CD8-positive, alpha-beta memory T cell (primary cell): ENCODE measurements at regions of chr6 and their contacts with region 1.

Region 1: GRCh38 chr6:158026054-158026900 is 44.6 kb downstream of the SYNJ2 start:
- DNase-seq: peak; percentile 67 to 90 (median 81)
- H3K4me3 ChIP-seq: peak overlapping the region; percentile 67
- H3K4me3 Mint-ChIP-seq: peak overlapping the region; percentile 80 to 91 (median 85)
- H3K27ac ChIP-seq: peak overlapping the region; percentile 73
- H3K27ac Mint-ChIP-seq: peak overlapping the region; percentile 96 to 99 (median 98)
- H3K4me1 ChIP-seq: peaks cover 27% of the 10 kb centered on the region
- H3K4me1 Mint-ChIP-seq: peaks cover 35 to 37% (median 36%) of the 10 kb centered on the region in 3 donors
- H3K27me3 ChIP-seq: no peaks in the 10 kb centered on the region
- H3K27me3 Mint-ChIP-seq: no peaks in the 10 kb centered on the region

Region 2: GRCh38 chr6:157756708-157757429 is 269.4 kb before region 1 on chr6:
- CTCF ChIA-PET with region 1: interaction called, 11 read pairs
- POLR2A ChIA-PET with region 1: no interaction called
- DNase-seq: peak; percentile 63 to 82 (median 69)
- H3K4me3 ChIP-seq: no peak overlapping the region
- H3K4me3 Mint-ChIP-seq: peak overlapping the region in 3 of 7 donors; percentile 20 to 41 (median 28)
- H3K27ac ChIP-seq: no peak overlapping the region
- H3K27ac Mint-ChIP-seq: peak overlapping the region in 5 of 8 donors; percentile 7 to 89 (median 64)
- H3K4me1 ChIP-seq: peaks cover 41% of the 10 kb centered on the region
- H3K4me1 Mint-ChIP-seq: peaks cover 26 to 64% (median 42%) of the 10 kb centered on the region in 3 donors
- H3K27me3 ChIP-seq: no peaks in the 10 kb centered on the region
- H3K27me3 Mint-ChIP-seq: peaks cover 23 to 25% of the 10 kb centered on the region in 2 donors

Region 3: DNA sequence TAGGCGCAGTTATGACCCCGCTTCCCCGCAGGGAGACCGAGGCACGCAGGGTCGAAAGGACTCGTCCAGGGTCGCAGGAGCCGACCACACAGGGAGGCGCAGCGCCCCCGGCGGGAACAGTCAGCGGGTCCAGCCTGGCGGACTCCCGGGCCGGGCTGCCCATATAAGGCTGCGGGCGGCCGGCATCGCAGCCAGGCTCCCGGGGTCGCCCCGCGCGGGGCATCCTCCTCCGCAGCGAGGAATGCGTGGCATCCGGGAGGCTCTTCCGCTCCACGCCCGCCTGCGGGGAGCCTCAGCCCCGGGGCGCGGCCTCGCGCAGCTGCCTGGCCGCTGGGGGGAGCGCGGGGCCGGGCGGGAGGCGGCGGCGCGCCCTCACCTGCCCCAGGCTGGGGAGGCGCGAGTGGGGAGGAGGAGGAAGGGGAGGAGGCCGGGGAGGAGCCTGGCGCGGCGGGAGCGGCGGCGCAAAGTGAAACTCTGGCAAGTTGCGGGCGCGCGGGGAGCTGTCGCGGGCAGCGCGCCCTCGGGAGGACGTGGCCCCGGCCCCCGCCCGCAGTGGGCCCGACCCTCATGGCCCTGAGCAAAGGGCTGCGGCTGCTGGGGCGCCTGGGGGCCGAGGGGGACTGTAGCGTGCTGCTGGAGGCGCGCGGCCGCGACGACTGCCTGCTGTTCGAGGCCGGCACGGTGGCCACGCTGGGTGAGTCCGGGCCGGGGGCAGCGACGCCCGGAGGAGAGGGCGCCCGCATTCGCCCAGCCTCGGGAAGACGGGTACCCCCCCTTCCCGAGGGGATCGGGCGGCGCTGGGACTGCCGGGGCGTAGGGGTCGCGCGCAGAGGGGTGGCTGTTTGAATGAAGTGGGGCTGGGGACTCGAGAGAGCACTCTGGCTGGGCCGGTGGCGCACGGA is 44.6 kb before region 1 on chr6 and contains the start of gene SYNJ2:
- CTCF ChIA-PET with region 1: interaction called, 22 read pairs
- POLR2A ChIA-PET with region 1: interaction called, 5 read pairs
- DNase-seq: peak; percentile 67 to 87 (median 84)
- H3K4me3 ChIP-seq: peak within 1 kb of the TSS; percentile 90
- H3K4me3 Mint-ChIP-seq: peak within 1 kb of the TSS; percentile 90 to 93 (median 92)
- H3K27ac ChIP-seq: peak within 1 kb of the TSS; percentile 48
- H3K27ac Mint-ChIP-seq: peak within 1 kb of the TSS; percentile 72 to 96 (median 88)
- H3K4me1 ChIP-seq: peaks cover 39% of the 10 kb centered on the region
- H3K4me1 Mint-ChIP-seq: peaks cover 30 to 48% (median 31%) of the 10 kb centered on the region in 3 donors
- H3K27me3 ChIP-seq: no peaks in the 10 kb centered on the region
- H3K27me3 Mint-ChIP-seq: peaks cover 0 to 1% of the 10 kb centered on the region in 2 donors
- total RNA-seq, gene SYNJ2: 16.7 to 17.5 TPM

Region 4: DNA sequence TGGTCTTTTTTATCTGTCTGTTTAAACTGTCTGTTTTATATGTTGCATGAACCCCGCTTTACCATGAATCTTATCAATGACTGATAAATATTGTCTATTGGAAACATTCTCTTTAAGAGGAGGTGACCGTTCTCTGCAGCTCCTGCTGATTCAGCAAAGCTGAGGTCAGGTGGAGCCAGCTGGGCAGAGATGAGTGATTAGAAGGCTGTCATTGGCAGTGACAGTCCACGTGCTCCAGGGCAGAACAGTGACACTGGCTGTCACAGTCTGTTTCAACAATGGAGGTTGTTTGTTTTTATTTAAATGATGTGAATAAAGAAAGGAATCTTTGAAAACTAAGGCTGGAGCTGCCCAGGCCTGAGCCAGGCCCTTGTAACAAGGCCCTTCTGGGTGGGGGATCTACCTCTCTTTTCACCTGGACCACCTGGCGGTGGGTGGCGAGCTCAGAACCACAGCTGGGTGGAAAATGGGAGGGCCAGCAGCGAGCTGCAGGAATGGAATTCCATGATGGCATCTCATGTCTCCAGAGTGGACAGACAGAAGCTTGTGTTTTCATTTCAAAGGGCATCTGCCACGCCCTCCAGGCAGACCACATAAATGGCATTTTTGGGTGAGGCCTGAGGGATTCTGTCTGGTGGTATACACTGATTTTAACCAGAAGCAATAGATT is 32.0 kb before region 1 on chr6:
- CTCF ChIA-PET with region 1: interaction called, 12 read pairs
- POLR2A ChIA-PET with region 1: no interaction called
- DNase-seq: no peak
- H3K4me3 ChIP-seq: no peak overlapping the region
- H3K4me3 Mint-ChIP-seq: no peak overlapping the region
- H3K27ac ChIP-seq: no peak overlapping the region
- H3K27ac Mint-ChIP-seq: peak overlapping the region in 1 of 8 donors; percentile 39
- H3K4me1 ChIP-seq: peaks cover 29% of the 10 kb centered on the region
- H3K4me1 Mint-ChIP-seq: peaks cover 31 to 44% (median 43%) of the 10 kb centered on the region in 3 donors
- H3K27me3 ChIP-seq: no peaks in the 10 kb centered on the region
- H3K27me3 Mint-ChIP-seq: peaks cover 0 to 2% of the 10 kb centered on the region in 2 donors

Region 5: DNA sequence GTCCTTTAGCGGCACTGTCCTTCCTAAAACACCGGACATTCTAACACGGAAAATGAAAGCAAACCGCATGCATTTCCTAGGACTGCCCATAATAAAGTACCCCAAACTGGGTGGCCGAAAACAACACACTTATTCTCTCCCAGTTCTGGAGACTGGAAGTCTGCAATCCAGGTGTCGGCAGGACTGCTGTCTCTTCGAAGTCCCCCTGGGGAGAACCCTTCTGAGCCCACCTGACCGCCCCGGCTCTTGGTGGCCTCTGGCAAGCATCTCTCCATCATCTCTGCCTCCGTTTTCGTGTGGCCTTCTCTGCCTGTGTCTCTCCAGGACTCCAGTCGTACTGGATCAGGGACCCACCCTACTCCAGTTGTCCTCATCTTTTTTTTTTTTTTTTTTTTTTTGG is 10.7 kb after region 1 on chr6:
- CTCF ChIA-PET with region 1: interaction called, 10 read pairs
- POLR2A ChIA-PET with region 1: no interaction called
- DNase-seq: no peak
- H3K4me3 ChIP-seq: no peak overlapping the region
- H3K4me3 Mint-ChIP-seq: no peak overlapping the region
- H3K27ac ChIP-seq: no peak overlapping the region
- H3K27ac Mint-ChIP-seq: peak overlapping the region in 1 of 8 donors; percentile 29
- H3K4me1 ChIP-seq: peaks cover 11% of the 10 kb centered on the region
- H3K4me1 Mint-ChIP-seq: peaks cover under 1 to 19% (median 9%) of the 10 kb centered on the region in 3 donors
- H3K27me3 ChIP-seq: no peaks in the 10 kb centered on the region
- H3K27me3 Mint-ChIP-seq: no peaks in the 10 kb centered on the region

Region 6: DNA sequence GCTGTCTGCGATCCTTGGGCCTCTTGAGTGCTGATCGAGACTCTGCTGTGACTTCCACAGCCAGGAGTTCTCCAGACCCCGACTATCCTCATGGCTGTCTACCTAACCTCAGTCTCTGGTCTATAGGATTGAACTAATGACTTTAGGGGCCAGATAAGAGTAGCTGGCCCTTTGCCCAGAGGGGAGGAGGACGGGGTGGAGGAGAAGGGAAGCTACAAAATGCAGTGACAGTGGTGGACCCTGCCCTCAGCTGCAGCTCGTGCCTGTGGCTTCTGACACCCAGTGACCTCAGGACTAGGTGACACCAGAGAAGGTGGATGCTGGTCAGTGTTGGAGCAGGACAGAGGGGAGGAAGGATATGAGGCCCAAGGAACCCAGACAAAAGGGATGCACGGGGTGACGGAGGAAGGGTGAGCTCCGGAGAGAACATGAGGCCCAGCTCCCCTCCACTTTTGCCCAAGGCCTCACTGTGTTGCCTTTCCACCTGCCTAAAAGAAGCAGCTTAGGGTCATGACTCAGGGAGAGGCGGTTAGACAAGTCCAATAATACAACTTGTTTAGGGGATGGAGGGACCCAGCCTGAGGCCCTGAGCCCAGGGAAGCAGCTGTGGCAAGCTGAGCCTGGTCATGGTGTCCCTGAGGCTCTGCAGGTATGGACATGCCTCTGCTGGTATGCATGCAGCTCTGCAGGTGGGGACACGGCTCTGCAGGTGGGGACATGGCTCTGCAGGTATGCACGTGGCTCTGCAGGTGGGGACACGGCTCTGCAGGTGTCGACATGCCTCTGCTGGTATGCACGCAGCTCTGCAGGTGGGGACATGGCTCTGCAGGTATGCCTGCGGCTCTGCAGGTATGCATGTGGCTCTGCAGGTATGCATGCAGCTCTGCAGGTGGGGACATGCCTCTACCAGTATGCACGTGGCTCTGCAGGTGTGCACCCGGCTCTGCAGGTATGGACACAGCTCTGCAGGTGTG is 23.1 kb after region 1 on chr6:
- CTCF ChIA-PET with region 1: interaction called, 12 read pairs
- POLR2A ChIA-PET with region 1: no interaction called
- DNase-seq: no peak
- H3K4me3 ChIP-seq: no peak overlapping the region
- H3K4me3 Mint-ChIP-seq: no peak overlapping the region
- H3K27ac ChIP-seq: no peak overlapping the region
- H3K27ac Mint-ChIP-seq: no peak overlapping the region
- H3K4me1 ChIP-seq: peaks cover 17% of the 10 kb centered on the region
- H3K4me1 Mint-ChIP-seq: peaks cover 14 to 17% (median 16%) of the 10 kb centered on the region in 3 donors
- H3K27me3 ChIP-seq: no peaks in the 10 kb centered on the region
- H3K27me3 Mint-ChIP-seq: no peaks in the 10 kb centered on the region

Region 7: DNA sequence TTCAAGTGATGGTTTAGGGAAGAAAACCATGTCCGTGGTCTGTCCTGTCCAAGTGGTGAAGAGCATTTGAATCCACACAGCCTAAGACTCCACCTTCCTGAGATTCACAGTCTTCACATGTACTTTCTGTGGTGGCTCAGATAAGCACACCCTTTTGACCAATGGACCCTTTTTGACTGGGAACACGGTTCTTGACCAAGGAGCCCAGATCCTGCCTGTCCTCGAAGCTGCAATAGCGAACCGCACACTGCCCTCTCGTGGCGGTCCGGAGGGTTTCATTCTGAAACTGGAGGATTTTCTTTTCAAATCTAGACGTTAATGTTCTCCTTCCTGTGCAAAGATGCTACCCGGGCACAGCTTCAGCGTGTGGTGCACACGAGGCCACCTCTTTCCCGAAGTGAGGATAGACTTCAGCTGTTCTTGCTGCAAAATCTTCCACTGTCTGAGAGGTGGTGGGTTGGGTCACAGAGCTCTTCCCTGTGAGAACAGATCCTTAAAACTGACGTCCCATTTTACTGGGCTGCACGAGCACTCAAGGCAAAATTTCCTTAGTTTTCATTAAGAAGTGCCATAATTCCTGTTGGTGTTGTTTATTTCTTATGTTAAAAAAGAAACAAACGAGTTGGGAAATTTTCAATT is 45.9 kb after region 1 on chr6:
- CTCF ChIA-PET with region 1: interaction called, 31 read pairs
- POLR2A ChIA-PET with region 1: no interaction called
- DNase-seq: peak; percentile 28 to 68 (median 42)
- H3K4me3 ChIP-seq: no peak overlapping the region
- H3K4me3 Mint-ChIP-seq: no peak overlapping the region
- H3K27ac ChIP-seq: no peak overlapping the region
- H3K27ac Mint-ChIP-seq: peak overlapping the region in 3 of 8 donors; percentile 66 to 82 (median 71)
- H3K4me1 ChIP-seq: peaks cover 7% of the 10 kb centered on the region
- H3K4me1 Mint-ChIP-seq: peaks cover 12 to 19% (median 13%) of the 10 kb centered on the region in 3 donors
- H3K27me3 ChIP-seq: no peaks in the 10 kb centered on the region
- H3K27me3 Mint-ChIP-seq: peaks cover 0 to 2% of the 10 kb centered on the region in 2 donors